ENCODE measurements at regions of chr6 and their contacts with region 1.

Region 1: GRCh38 chr6:30914076-30914853 is at the start of gene VARS2:
- DNase-seq: peak; percentile 93
- H3K4me3 Mint-ChIP-seq: peak within 1 kb of the TSS; percentile 77
- H3K27ac Mint-ChIP-seq: peak within 1 kb of the TSS; percentile 92
- H3K4me1 Mint-ChIP-seq: peaks cover 19% of the 10 kb centered on the region
- H3K27me3 Mint-ChIP-seq: no peaks in the 10 kb centered on the region
- CTCF ChIP-seq: no peak
- total RNA-seq, gene VARS2: 38.8 and 52.7 TPM in 2 replicates

Region 2: DNA sequence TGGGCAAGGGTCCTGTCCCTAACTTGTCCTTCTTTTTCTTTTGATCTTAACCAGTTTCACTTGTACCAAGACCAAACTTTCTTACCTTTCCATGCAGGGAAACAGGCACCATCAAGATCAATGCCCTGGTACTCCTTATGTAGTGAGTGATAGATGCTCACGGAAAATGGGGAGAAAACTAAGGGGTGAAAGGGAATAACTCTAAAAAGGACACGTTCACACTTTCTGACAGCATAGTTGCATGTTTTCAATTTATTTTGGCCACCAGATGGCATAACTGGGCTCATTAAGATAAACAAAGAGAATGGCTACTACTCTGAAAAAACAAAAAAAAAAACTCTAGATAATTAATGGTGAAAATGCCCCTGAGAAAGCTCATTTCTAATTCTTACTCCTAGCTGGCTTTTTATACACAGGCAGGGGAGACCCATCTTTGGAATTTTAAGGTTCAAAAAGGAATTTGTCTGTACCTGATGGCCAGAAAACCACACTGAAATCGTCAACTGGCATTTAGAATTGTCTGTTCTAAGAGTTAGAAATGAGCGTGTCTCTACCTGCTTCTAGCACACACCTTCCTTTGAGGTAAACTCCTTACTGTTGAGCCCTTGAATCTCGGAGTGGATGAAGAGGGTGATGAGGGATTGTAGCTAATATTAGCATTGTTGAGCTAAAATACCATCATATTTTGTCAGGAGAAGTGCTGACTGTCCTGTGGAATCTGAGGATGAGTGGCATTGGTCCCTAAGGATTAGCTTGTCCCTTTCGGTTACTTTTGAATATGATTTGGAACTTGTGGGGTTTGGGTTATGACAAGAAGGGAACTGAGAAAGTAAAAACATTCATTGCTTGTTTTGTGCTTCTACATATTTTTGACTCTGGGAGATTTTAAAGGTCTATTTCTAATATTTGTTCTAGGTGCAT is 92.1 kb before region 1 on chr6:
- CTCF ChIA-PET with region 1: interaction called, 25 read pairs
- POLR2A ChIA-PET with region 1: interaction called, 27 read pairs
- intact Hi-C with region 1: no loop called
- DNase-seq: peak; percentile 65
- H3K4me3 Mint-ChIP-seq: no peak overlapping the region
- H3K27ac Mint-ChIP-seq: peak overlapping the region; percentile 63
- H3K4me1 Mint-ChIP-seq: peaks cover 50% of the 10 kb centered on the region
- H3K27me3 Mint-ChIP-seq: no peaks in the 10 kb centered on the region
- CTCF ChIP-seq: peak; percentile 54

Region 3: DNA sequence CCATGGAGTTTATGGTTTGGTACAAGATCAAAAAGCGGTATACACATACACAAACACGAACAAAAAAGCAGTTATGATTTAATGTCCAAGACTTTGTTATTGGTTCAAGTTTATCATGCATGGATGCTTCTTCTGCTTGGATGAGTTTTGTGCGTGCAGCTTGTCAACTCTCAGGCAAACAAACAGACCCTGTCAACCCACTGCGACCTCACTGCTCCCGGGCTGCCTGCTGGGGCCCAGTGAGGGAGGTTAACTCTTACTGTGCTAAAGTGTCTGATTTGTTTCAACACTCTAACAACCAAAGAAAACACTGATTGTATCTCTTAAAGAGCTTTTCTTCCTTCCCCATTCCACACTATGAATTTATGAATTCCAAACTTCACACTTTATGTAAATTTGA is 56.7 kb before region 1 on chr6:
- CTCF ChIA-PET with region 1: no interaction called
- POLR2A ChIA-PET with region 1: no interaction called
- intact Hi-C with region 1: no loop called
- DNase-seq: no peak
- H3K4me3 Mint-ChIP-seq: no peak overlapping the region
- H3K27ac Mint-ChIP-seq: no peak overlapping the region
- H3K4me1 Mint-ChIP-seq: peaks cover 5% of the 10 kb centered on the region
- H3K27me3 Mint-ChIP-seq: no peaks in the 10 kb centered on the region
- CTCF ChIP-seq: no peak

Region 4: GRCh38 chr6:30889921-30890645 is 24.2 kb before region 1 on chr6:
- CTCF ChIA-PET with region 1: interaction called, 19 read pairs
- POLR2A ChIA-PET with region 1: interaction called, 100 read pairs
- intact Hi-C with region 1: loop called (anchors 2 kb)
- DNase-seq: peak; percentile 83
- H3K4me3 Mint-ChIP-seq: peak overlapping the region; percentile 30
- H3K27ac Mint-ChIP-seq: peak overlapping the region; percentile 17
- H3K4me1 Mint-ChIP-seq: peaks cover 44% of the 10 kb centered on the region
- H3K27me3 Mint-ChIP-seq: no peaks in the 10 kb centered on the region
- CTCF ChIP-seq: no peak

Region 5: DNA sequence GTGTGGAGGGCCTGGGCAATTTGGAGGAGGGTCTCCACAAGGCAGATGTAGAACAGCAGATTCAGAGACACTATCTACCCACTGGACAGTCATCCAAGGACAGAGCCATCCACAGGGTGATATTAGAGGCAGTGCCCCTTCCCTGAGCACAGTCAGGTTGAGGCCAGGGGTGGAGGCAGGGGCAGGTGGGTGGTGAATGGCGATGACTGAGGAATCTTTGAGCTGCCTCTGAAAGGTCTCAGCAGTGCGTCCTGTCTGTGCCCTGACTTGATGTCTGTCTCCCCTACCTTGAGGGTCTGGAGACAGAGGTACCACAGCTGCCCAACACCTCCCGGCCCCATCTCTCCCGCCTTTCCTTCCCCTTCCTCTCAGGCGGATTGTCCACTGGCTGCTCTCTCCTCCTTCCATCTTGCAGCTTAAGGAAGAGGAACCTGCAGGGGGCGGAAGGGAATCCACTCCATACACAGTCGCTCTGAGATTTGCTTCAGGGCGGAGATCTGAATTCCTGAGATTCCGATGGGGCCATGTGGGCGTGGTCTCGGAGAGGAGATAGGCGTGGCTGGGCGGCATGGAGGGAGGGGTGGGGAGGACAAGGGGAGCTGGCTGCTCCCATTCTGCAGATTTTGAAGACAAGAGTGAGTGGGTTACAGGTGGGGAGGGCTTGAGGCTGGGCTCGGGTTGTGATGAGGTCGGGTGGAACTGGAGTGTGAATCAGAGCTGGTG is 28.2 kb after region 1 on chr6:
- CTCF ChIA-PET with region 1: interaction called, 21 read pairs
- POLR2A ChIA-PET with region 1: interaction called, 8 read pairs
- intact Hi-C with region 1: loop called (anchors 1 kb)
- DNase-seq: peak; percentile 88
- H3K4me3 Mint-ChIP-seq: peak overlapping the region; percentile 54
- H3K27ac Mint-ChIP-seq: peak overlapping the region; percentile 43
- H3K4me1 Mint-ChIP-seq: peaks cover 29% of the 10 kb centered on the region
- H3K27me3 Mint-ChIP-seq: no peaks in the 10 kb centered on the region
- CTCF ChIP-seq: peak; percentile 50

Region 6: GRCh38 chr6:31058128-31058894 is 144.0 kb after region 1 on chr6:
- CTCF ChIA-PET with region 1: interaction called, 28 read pairs
- POLR2A ChIA-PET with region 1: interaction called, 6 read pairs
- intact Hi-C with region 1: no loop called
- DNase-seq: peak; percentile 91
- H3K4me3 Mint-ChIP-seq: peak overlapping the region; percentile 19
- H3K27ac Mint-ChIP-seq: peak overlapping the region; percentile 73
- H3K4me1 Mint-ChIP-seq: peaks cover 37% of the 10 kb centered on the region
- H3K27me3 Mint-ChIP-seq: no peaks in the 10 kb centered on the region
- CTCF ChIP-seq: peak; percentile 41

Region 7: GRCh38 chr6:31087494-31088089 is 173.3 kb after region 1 on chr6:
- CTCF ChIA-PET with region 1: interaction called, 749 read pairs
- POLR2A ChIA-PET with region 1: interaction called, 4 read pairs
- intact Hi-C with region 1: no loop called
- DNase-seq: peak; percentile 91
- H3K4me3 Mint-ChIP-seq: no peak overlapping the region
- H3K27ac Mint-ChIP-seq: peak overlapping the region; percentile 16
- H3K4me1 Mint-ChIP-seq: peaks cover 21% of the 10 kb centered on the region
- H3K27me3 Mint-ChIP-seq: no peaks in the 10 kb centered on the region
- CTCF ChIP-seq: peak; percentile 65

Region 8: GRCh38 chr6:31128093-31128676 is 213.9 kb after region 1 on chr6:
- CTCF ChIA-PET with region 1: interaction called, 12 read pairs
- POLR2A ChIA-PET with region 1: no interaction called
- intact Hi-C with region 1: no loop called
- DNase-seq: peak; percentile 72
- H3K4me3 Mint-ChIP-seq: no peak overlapping the region
- H3K27ac Mint-ChIP-seq: peak overlapping the region; percentile 82
- H3K4me1 Mint-ChIP-seq: peaks cover 38% of the 10 kb centered on the region
- H3K27me3 Mint-ChIP-seq: no peaks in the 10 kb centered on the region
- CTCF ChIP-seq: peak; percentile 88